Activated B cell treated with CpG ODN at 0.5 μM for 24 hours (primary cell): ENCODE measurements at regions of chr17 and their contacts with region 1.

Region 1: DNA sequence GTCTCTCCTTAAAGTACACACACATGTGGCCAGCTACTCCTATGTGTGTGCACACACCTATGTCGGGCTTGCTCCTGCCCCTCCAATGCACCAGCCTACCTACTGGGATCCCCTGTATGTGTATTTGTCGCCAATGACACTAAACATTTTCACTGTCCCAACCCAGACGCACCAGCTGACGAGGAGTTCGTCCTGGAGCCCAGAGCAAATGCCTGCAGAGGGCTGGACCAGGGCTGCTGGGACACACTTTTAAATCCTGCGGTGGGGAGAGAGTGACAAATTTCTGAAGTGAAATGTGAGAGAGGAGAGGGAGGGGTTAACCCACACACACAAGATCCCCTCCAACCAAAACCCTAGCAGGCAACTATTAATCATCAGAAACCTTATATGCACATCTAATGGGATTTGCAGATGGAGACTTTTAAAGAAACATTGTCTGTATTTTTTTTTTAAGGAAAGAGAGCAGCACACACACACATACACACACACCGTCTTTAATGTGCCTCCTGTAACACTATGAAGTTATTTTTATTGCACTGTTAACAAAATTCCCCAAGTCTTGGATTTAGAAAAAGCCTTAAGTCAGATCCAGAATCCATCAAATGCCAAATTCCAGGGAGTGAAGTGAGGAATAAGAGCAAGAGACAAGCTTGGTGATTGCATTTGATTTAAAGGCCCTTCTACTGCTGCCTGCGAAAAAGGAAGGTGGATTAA is at the start of gene MEOX1:
- DNase-seq: no peak
- ATAC-seq: no peak
- H3K4me3 Mint-ChIP-seq: no peak within 1 kb of the TSS
- H3K27ac Mint-ChIP-seq: no peak within 1 kb of the TSS
- H3K4me1 Mint-ChIP-seq: no peaks in the 10 kb centered on the region
- H3K27me3 Mint-ChIP-seq: peaks cover 24% of the 10 kb centered on the region
- CTCF ChIP-seq: no peak
- total RNA-seq, gene MEOX1: not detected in 2 replicates

Region 2: DNA sequence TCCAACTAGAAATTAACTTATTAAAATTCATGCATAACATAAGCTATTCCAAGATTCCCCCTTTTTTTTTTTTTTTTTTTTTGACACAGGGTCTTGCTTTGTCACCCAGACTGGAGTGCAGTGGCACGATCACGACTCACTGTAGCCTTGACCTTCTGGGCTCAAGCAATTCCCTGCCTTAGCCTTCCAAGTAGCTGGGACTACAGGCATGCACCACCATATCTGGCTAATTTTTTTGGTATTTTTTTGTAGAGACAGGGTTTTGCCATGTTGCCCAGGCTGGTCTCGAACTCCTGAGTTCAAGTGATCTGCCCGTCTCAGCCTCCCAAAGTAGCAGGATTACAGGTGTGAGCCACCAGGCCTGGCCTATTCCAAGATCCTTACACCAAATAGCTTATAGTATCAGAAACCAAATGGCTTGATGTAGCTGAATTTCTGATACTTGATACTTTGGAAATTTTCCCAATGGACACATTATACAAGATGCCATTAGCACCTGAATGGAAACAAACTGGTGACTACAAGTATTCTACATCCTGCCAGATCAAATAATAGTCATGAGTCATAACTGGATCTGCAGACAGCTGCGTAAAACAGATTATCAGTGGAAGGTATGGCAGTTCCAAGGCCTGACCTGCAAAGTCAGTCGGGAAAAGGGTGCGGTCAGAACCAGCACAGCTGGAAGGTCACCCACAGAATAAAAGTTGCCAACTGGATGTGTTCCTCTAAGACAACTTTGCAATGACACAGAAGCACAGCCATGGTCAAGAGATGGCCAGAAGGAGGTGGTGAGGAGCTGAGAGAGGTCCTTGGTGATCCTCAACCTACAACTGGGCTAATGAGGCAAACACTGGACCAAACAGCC is 1037.9 kb before region 1 on chr17:
- CTCF ChIA-PET with region 1: no interaction called
- POLR2A ChIA-PET with region 1: interaction called, 10 read pairs
- intact Hi-C with region 1: no loop called
- DNase-seq: no peak
- ATAC-seq: no peak
- H3K4me3 Mint-ChIP-seq: no peak overlapping the region
- H3K27ac Mint-ChIP-seq: no peak overlapping the region
- H3K4me1 Mint-ChIP-seq: peaks cover 3% of the 10 kb centered on the region
- H3K27me3 Mint-ChIP-seq: no peaks in the 10 kb centered on the region
- CTCF ChIP-seq: no peak